CD4-positive, alpha-beta memory T cell (primary cell): ENCODE measurements at regions of chr16 and their contacts with region 1.

Region 1: DNA sequence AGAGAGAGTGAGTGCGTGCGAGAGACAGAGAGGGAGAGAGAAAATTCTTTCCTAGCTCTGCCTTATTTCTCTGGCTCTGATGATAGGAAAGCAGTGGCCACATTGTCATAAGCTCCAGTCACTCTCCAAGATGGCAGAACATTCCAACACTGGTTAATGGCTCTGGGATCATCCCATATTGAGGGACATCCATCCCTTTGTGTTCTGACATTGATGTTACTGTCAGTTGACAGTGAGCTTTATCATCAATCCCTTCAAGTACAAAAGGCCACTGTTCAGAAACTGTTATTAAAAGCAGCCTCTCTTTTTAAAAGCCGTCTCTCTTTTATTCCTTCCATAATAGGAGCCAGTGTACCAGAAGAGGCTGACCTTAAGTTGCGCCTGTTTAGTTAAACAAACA is 1084.9 kb upstream of the RBFOX1 start:
- DNase-seq: no peak
- H3K4me3 ChIP-seq: no peak overlapping the region
- H3K4me3 Mint-ChIP-seq: no peak overlapping the region
- H3K27ac ChIP-seq: no peak overlapping the region
- H3K27ac Mint-ChIP-seq: no peak overlapping the region
- H3K4me1 ChIP-seq: no peaks in the 10 kb centered on the region
- H3K4me1 Mint-ChIP-seq: no peaks in the 10 kb centered on the region
- H3K27me3 ChIP-seq: no peaks in the 10 kb centered on the region
- H3K27me3 Mint-ChIP-seq: no peaks in the 10 kb centered on the region

Region 2: GRCh38 chr16:6189216-6189615 is 58.6 kb before region 1 on chr16:
- CTCF ChIA-PET with region 1: no interaction called
- POLR2A ChIA-PET with region 1: no interaction called
- intact Hi-C with region 1: loop called (anchors 10 kb)
- DNase-seq: no peak
- H3K4me3 ChIP-seq: no peak overlapping the region
- H3K4me3 Mint-ChIP-seq: no peak overlapping the region
- H3K27ac ChIP-seq: no peak overlapping the region
- H3K27ac Mint-ChIP-seq: no peak overlapping the region
- H3K4me1 ChIP-seq: no peaks in the 10 kb centered on the region
- H3K4me1 Mint-ChIP-seq: no peaks in the 10 kb centered on the region
- H3K27me3 ChIP-seq: no peaks in the 10 kb centered on the region
- H3K27me3 Mint-ChIP-seq: no peaks in the 10 kb centered on the region